ENCODE measurements at regions of chr22 and their contacts with region 1.

Region 1: GRCh38 chr22:33202455-33202854 is 144.3 kb upstream of the SYN3 start:
- DNase-seq: no peak
- H3K4me3 ChIP-seq: no peak overlapping the region
- H3K27ac ChIP-seq: no peak overlapping the region
- H3K4me1 ChIP-seq: no peaks in the 10 kb centered on the region
- H3K27me3 ChIP-seq: peaks cover 78% of the 10 kb centered on the region
- CTCF ChIP-seq: no peak

Region 2: DNA sequence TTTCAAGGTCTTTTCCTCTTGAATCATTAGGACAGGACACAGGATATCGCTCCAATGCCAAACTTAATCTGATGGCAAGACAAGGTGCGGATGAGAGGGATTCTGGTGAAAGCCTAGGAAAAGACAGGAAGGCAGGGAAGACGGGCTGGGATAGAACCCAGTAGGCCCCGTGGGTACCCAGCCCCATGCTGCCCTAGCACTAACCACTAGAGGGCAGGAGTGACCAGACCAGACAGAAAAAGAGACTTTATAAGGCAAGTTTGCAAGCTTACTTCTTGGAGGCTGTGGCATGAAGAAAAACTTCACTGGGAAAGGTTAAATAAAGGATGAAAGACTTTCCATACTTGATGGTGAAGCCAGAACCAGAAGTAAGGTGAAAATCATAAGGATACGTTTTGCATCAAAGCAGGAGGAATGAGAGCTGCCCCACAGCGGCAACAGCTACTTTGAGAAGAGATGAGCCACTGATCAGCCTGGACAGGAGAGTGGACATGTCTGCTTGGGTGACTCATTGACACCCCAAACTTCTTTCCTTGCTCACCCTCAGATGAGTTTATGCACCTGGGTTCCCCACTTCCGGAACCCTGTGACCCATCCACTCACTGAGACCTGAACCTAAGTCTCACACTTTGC is 184.1 kb before region 1 on chr22:
- CTCF ChIA-PET with region 1: interaction called, 17 read pairs
- POLR2A ChIA-PET with region 1: no interaction called
- intact Hi-C with region 1: loop called (anchors 5 kb)
- DNase-seq: peak in 1 of 2 experiments; percentile 50
- H3K4me3 ChIP-seq: no peak overlapping the region
- H3K27ac ChIP-seq: no peak overlapping the region
- H3K4me1 ChIP-seq: no peaks in the 10 kb centered on the region
- H3K27me3 ChIP-seq: peaks cover 47% of the 10 kb centered on the region
- CTCF ChIP-seq: peak; percentile 95

Measured in PC-9 (cell line).